Activated naive CD4-positive, alpha-beta T cell treated with anti-CD3 and anti-CD28 coated beads, Interleukin-2, amount 10 ng/mL, durations not matched to agents 7 days and 5 days (primary cell): ENCODE measurements at regions of chr13 and their contacts with region 1.

Region 1: DNA sequence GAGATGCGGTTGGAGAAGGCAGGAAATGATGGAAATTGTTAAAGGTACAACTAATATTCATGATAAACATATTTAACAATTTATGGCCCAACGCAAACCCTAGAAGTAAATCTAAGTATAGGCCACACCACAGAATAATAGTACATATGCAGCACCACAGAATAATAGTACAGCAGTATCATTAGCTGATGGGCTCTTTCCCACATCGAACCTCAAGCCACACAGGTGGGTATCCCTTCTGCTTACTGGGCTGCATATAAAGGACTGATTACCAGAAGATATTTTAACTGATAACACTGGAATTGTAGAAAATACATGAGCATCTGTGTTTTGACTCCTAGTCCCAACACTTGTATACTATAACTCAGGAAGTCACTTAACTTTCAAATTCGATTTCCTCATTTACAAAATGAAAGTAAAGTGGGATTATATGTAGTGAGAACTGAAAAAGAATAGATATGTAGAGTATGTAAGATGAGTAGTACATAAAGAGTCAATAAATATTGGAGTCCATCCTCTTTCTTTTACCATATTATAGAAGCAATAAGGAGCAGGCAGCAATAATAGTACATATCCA is 91.5 kb downstream of the TSC22D1 start:
- DNase-seq: no peak
- H3K4me3 Mint-ChIP-seq: peak overlapping the region; percentile 29
- H3K27ac Mint-ChIP-seq: peak overlapping the region; percentile 15
- H3K4me1 Mint-ChIP-seq: peaks cover 14% of the 10 kb centered on the region
- H3K27me3 Mint-ChIP-seq: no peaks in the 10 kb centered on the region

Region 2: DNA sequence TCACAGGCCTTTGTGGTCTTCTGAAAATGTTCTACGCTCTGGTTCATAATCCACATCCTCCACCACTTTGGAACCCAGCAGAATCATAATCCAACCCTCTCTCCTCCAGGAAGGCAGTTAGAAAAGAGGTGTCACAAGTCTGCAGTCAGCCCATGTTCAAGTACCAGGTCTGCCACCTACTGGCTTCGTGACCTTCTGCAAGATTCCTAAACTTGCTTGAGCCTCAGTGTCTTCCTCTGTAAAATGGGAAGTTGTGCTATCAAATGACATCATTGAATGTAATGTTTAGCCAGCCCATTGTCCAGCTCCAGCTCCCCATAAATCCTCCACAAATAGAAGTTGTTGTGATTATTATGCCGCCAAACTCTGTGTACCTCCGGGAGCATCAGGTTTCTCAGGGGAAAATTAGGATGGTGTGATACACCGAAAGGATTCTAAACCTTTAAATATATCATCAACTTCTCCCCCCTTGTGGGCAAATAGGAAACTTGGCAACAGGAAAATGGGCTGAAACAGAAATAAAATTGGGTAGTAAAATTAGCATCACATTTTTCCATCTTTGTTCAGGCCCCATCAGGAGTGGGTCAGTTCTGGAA is 394.9 kb after region 1 on chr13:
- CTCF ChIA-PET with region 1: interaction called, 41 read pairs
- DNase-seq: peak; percentile 32
- H3K4me3 Mint-ChIP-seq: no peak overlapping the region
- H3K27ac Mint-ChIP-seq: no peak overlapping the region
- H3K4me1 Mint-ChIP-seq: no peaks in the 10 kb centered on the region
- H3K27me3 Mint-ChIP-seq: no peaks in the 10 kb centered on the region

Region 3: GRCh38 chr13:44969551-44970484 is 485.2 kb after region 1 on chr13:
- CTCF ChIA-PET with region 1: interaction called, 31 read pairs
- DNase-seq: no peak
- H3K4me3 Mint-ChIP-seq: no peak overlapping the region
- H3K27ac Mint-ChIP-seq: no peak overlapping the region
- H3K4me1 Mint-ChIP-seq: peaks cover 2% of the 10 kb centered on the region
- H3K27me3 Mint-ChIP-seq: no peaks in the 10 kb centered on the region